A673 (cell line): ENCODE measurements at regions of chr1 and their contacts with region 1.

Region 1: DNA sequence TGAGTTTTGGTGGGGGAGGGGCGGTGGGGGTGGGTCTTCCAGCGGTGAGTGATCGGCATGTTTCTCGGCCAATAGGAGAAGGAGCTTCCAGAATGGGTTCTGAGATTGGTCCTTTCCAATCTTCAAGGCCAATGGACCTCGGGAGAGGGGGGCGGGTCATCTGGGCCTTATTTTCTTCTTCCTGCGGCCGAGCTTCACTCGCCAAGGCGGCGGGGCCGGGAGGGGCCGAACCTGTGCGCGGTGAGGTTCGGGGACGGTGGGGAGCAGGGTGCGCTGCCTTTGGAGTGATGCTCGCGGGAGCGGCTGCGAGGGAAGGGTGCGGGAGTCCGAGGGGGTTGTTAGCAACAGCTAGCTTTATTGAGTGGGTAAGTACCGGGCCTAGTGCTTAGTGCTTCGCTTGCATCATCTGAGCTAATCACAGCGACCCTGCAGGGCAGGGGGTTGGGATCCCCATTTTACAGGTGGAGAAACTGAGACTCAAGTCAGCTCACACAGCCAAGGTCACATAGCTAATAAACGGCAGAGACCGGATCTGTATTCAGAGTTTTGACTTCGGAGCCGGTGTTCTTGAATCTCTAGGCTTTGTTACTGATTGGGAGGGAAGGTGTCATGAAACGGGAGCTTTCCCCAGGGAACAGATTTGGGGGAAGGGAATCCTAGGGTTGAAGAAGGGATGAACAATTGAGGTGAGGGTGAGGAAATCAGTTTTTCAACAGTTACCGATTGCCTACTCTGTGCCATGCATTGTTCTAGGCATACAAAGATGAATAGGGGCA is 549 bp downstream of the KDM4A start:
- DNase-seq: peak; percentile 98
- H3K4me3 ChIP-seq: peak overlapping the region; percentile 82
- H3K27ac ChIP-seq: peak overlapping the region; percentile 88
- H3K4me1 ChIP-seq: peaks cover 10% of the 10 kb centered on the region
- H3K27me3 ChIP-seq: no peaks in the 10 kb centered on the region
- CTCF ChIP-seq: no peak

Region 2: DNA sequence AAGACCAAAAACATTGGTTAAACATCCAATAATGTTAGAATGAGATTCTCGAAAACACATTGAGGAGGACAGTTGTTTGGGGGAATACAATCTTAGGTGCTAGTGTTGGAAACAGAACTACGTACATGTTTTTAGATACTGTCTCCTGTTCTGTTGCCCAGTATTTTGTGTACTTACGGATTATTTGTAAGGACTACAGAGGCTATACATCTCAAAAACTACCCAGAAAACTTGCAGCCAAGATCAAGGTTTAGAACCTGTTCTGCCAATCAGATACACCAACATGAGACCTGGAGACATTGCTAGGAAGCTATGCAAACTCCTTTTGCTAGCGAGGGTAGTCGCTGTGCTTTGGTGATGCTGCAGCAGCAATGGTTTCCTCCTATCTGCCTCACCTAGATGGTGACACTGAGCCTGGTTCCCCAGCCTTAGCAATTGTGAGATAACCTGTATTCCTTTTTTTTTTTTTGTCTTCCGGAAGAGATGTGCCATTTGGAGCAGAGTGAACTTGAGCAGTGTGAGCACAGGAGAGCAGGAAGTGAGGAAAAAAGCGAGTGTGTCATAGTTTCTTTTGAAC is 946.5 kb before region 1 on chr1:
- CTCF ChIA-PET with region 1: no interaction called
- POLR2A ChIA-PET with region 1: no interaction called
- intact Hi-C with region 1: no loop called
- DNase-seq: no peak
- H3K4me3 ChIP-seq: no peak overlapping the region
- H3K27ac ChIP-seq: no peak overlapping the region
- H3K4me1 ChIP-seq: no peaks in the 10 kb centered on the region
- H3K27me3 ChIP-seq: no peaks in the 10 kb centered on the region
- CTCF ChIP-seq: no peak

Region 3: GRCh38 chr1:43423672-43424550 is 226.6 kb before region 1 on chr1:
- CTCF ChIA-PET with region 1: no interaction called
- POLR2A ChIA-PET with region 1: no interaction called
- intact Hi-C with region 1: no loop called
- DNase-seq: no peak
- H3K4me3 ChIP-seq: no peak overlapping the region
- H3K27ac ChIP-seq: no peak overlapping the region
- H3K4me1 ChIP-seq: no peaks in the 10 kb centered on the region
- H3K27me3 ChIP-seq: no peaks in the 10 kb centered on the region
- CTCF ChIP-seq: no peak

Region 4: GRCh38 chr1:43616383-43616782 is 34.1 kb before region 1 on chr1:
- CTCF ChIA-PET with region 1: no interaction called
- POLR2A ChIA-PET with region 1: interaction called, 12 read pairs
- intact Hi-C with region 1: no loop called
- DNase-seq: no peak
- H3K4me3 ChIP-seq: no peak overlapping the region
- H3K27ac ChIP-seq: no peak overlapping the region
- H3K4me1 ChIP-seq: no peaks in the 10 kb centered on the region
- H3K27me3 ChIP-seq: no peaks in the 10 kb centered on the region
- CTCF ChIP-seq: no peak